GM10248 (cell line): ENCODE measurements at regions of chr19 and their contacts with region 1.

Region 1: DNA sequence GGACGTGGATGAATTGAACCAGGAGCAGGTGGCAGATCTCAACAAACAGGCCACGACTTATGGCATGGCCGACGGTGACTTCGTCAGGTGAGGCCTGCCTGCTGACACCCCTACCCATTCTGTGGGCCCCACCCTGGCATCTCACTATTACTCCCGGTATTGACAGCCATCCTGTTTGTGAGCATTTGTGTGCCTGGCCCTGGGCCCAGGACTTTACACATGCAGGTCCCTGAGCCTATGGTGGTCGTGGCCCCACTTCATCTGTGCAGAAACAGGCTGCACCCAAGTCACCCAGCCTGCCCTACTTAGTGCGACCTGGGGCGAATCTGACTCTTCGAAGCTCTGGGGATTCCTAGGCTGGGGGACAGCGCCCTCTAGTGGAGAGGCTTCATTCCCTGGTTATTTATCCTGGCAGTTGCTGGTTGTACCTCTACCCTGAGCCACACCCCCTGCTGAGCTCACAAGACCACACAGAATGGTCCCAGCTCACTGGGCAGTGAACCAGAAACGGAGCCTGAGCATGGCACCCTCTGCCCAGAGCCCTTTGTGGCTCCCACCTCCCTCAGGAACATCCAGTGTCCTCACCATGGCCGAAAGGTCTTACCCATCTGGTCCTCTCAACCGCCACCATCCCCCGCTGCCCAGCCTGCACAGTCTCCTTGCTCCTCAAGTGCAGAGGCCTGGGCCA is 16.9 kb downstream of the ZNF296 start:
- DNase-seq: peak; percentile 88
- CTCF ChIP-seq: peak; percentile 82

Region 2: GRCh38 chr19:44903602-44904425 is 155.6 kb before region 1 on chr19:
- CTCF ChIA-PET with region 1: interaction called, 17 read pairs
- POLR2A ChIA-PET with region 1: no interaction called
- DNase-seq: peak; percentile 87
- CTCF ChIP-seq: peak; percentile 97

Region 3: DNA sequence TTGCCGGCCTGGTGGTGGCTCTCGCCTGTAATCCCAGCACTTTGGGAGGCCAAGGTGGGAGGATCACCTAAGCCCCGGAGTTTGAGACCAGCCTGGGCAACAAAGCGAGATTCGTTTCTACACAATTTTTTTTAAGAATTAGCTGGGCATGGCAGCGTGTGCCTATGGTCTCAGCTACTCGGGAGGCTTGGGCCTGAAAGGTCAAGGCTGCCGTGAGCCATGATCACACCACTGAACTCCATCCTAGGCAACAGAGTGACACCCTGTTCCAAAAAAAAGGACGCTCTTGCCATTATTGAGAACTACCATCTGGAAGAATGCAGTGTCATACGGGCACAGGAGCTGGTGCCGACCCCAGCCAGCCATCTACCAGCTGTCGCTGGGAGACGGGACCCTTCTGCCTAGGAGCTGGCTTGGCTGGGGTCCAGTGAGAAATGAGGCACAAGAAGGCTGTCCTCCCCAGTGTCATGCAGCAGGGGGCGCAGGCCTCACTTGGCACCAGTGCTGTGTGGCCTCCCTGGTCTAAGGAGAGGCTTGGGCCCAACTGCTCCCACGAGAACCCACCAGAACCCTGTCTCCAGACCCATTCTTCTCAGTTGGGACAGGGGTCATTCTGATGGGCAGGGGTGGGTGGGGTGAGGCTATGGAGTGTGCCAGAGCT is 70.4 kb before region 1 on chr19:
- CTCF ChIA-PET with region 1: interaction called, 65 read pairs
- POLR2A ChIA-PET with region 1: no interaction called
- DNase-seq: peak; percentile 85
- CTCF ChIP-seq: peak; percentile 71

Region 4: GRCh38 chr19:45038931-45039893 is 20.2 kb before region 1 on chr19 and contains the start of gene CLASRP:
- CTCF ChIA-PET with region 1: interaction called, 120 read pairs
- POLR2A ChIA-PET with region 1: interaction called, 6 read pairs
- DNase-seq: peak; percentile 93
- CTCF ChIP-seq: no peak

Region 5: GRCh38 chr19:45049073-45049736 is 10.2 kb before region 1 on chr19:
- CTCF ChIA-PET with region 1: interaction called, 120 read pairs
- POLR2A ChIA-PET with region 1: no interaction called
- DNase-seq: no peak
- CTCF ChIP-seq: no peak

Region 6: GRCh38 chr19:45079063-45079910 is 19.9 kb after region 1 on chr19 and contains the start of gene GEMIN7:
- CTCF ChIA-PET with region 1: interaction called, 48 read pairs
- POLR2A ChIA-PET with region 1: no interaction called
- DNase-seq: peak; percentile 82
- CTCF ChIP-seq: peak; percentile 7

Region 7: GRCh38 chr19:45137179-45137761 is 77.8 kb after region 1 on chr19:
- CTCF ChIA-PET with region 1: no interaction called
- POLR2A ChIA-PET with region 1: no interaction called
- DNase-seq: peak; percentile 86
- CTCF ChIP-seq: peak; percentile 40